A549 (cell line): ENCODE measurements at regions of chr1 and their contacts with region 1.

Region 1: GRCh38 chr1:225777583-225778336 is at the start of gene SRP9:
- DNase-seq: peak; percentile 92 to 98
- ATAC-seq: peak; percentile 99 to 100
- H3K4me3 ChIP-seq: peak within 1 kb of the TSS; percentile 85
- H3K27ac ChIP-seq: peak within 1 kb of the TSS; percentile 93 to 97
- H3K4me1 ChIP-seq: peaks cover 46% of the 10 kb centered on the region
- CTCF ChIP-seq: peak; percentile 82
- EP300 ChIP-seq: no peak
- POLR2A ChIP-seq: no peak; the same call in 1 of the 2 replicates
- RAD21 ChIP-seq: peak; percentile 63 to 71
- polyA plus RNA-seq, gene SRP9: 512 and 629 TPM in 2 replicates

Region 2: DNA sequence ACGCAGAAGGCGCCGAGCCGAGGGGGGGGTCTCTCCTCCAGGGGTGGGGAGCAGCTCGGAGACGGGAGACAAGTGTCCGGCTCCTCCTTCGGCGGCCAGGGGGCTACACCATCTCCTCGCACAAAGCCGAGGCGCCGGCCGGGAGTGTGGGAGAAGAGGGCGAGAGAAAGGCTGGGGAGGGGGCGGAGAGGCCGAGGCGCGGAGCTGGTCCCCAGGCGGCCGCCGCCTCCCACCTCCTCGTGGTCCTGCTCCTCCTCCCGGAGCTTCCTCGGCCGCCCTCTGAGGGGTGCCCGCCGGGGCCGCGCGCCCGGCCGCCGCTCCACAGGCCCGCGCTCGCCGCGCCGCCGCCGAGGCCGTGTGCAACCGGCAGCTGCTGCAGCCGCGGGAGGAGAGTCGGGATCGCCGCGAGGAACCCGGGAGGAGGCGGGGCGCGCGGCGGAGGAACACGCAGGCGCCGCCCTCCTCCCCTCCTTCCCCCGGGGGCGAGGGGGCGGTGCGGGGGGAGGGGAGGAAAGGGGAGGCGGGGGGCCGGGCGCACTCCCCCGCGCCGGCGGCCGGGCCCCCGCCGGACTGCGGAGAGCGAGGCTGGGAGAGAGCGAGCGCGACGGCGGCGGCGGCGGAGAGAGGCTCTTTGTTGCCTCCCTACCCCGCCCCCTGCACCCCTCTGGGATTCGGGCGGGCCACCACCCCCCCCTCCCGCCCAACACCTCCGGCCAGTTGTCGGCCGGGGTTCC is 124.9 kb before region 1 on chr1 and contains the start of gene ENAH:
- CTCF ChIA-PET with region 1: interaction called, 43 read pairs
- POLR2A ChIA-PET with region 1: interaction called, 16 read pairs
- DNase-seq: peak; percentile 65 to 88
- ATAC-seq: peak; percentile 72 to 76
- H3K4me3 ChIP-seq: peak within 1 kb of the TSS; percentile 93
- H3K27ac ChIP-seq: peak within 1 kb of the TSS; percentile 95 to 100
- H3K4me1 ChIP-seq: peaks cover 56% of the 10 kb centered on the region
- CTCF ChIP-seq: no peak
- EP300 ChIP-seq: peak in 1 of 2 experiments; percentile 50; a peak in 1 of 5 replicates
- POLR2A ChIP-seq: peak; percentile 80
- RAD21 ChIP-seq: no peak; a peak in 2 of 5 replicates
- polyA plus RNA-seq, gene ENAH: 124 and 142 TPM in 2 replicates

Region 3: GRCh38 chr1:225766967-225767633 is 10.7 kb before region 1 on chr1:
- CTCF ChIA-PET with region 1: interaction called, 43 read pairs
- POLR2A ChIA-PET with region 1: interaction called, 16 read pairs
- DNase-seq: no peak
- ATAC-seq: no peak
- H3K4me3 ChIP-seq: no peak overlapping the region
- H3K27ac ChIP-seq: peak overlapping the region; percentile 52 to 75
- H3K4me1 ChIP-seq: peaks cover 65% of the 10 kb centered on the region
- CTCF ChIP-seq: no peak
- EP300 ChIP-seq: no peak
- POLR2A ChIP-seq: no peak
- RAD21 ChIP-seq: no peak

Region 4: GRCh38 chr1:225845571-225846259 is 68.0 kb after region 1 on chr1:
- CTCF ChIA-PET with region 1: interaction called, 16 read pairs
- POLR2A ChIA-PET with region 1: interaction called, 3 read pairs
- DNase-seq: peak; percentile 72 to 88
- ATAC-seq: peak; percentile 80 to 88
- H3K4me3 ChIP-seq: no peak overlapping the region
- H3K27ac ChIP-seq: peak overlapping the region in 1 of 2 experiments; percentile 60; a peak in 3 of 6 replicates
- H3K4me1 ChIP-seq: peaks cover 6% of the 10 kb centered on the region; the same call in 1 of the 3 replicates
- CTCF ChIP-seq: peak; percentile 66
- EP300 ChIP-seq: no peak
- POLR2A ChIP-seq: no peak
- RAD21 ChIP-seq: peak; percentile 85 to 93

Region 5: DNA sequence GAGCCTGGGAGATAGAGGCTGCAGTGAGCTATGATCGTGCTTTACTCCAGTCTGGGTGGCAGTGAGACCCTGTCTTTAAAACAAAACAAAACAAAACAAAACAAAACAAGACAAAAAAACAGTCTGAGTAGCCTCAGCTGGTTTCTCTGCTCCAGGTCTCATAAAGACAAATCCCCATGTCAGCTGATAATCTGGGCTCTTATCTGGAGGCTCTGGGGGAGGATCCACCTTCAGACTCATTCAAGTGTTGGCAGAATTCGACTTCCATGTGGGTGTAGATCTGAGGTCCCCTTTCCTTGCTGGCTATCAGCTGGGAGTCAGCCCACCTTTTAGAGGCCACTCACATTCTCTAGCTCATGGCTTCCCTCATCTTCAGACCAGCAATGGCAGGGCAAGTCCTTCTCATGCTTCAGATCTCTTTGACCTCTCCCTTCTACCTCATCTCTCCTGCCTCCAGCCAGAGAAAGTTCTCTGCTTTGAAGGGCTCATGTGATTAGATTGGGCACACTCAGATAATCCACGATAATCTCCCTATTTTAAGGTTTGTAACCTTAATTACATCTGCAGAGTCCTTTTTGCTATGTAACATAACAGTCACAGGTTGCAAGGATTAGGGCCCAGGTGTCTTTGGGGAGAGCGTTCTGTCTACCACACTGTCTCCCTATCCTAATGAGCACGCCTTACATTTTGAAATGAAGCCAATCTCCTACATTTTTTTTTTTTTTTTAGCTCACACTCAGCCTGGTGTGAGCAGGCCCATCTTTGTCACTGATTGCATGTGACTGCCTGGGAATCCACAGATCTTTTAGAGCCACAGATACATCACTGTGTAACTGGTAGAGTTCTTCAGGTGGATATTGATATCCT is 153.7 kb after region 1 on chr1:
- CTCF ChIA-PET with region 1: no interaction called
- POLR2A ChIA-PET with region 1: no interaction called
- DNase-seq: no peak
- ATAC-seq: no peak
- H3K4me3 ChIP-seq: no peak overlapping the region
- H3K27ac ChIP-seq: no peak overlapping the region
- H3K4me1 ChIP-seq: 0 out of 3 replicates have a peak, but pooled peaks cover 3% of the 10 kb centered on the region
- CTCF ChIP-seq: no peak
- EP300 ChIP-seq: no peak
- POLR2A ChIP-seq: no peak
- RAD21 ChIP-seq: no peak